Motor neuron (in vitro differentiated cells): ENCODE measurements at regions of chr1 and their contacts with region 1.

Region 1: DNA sequence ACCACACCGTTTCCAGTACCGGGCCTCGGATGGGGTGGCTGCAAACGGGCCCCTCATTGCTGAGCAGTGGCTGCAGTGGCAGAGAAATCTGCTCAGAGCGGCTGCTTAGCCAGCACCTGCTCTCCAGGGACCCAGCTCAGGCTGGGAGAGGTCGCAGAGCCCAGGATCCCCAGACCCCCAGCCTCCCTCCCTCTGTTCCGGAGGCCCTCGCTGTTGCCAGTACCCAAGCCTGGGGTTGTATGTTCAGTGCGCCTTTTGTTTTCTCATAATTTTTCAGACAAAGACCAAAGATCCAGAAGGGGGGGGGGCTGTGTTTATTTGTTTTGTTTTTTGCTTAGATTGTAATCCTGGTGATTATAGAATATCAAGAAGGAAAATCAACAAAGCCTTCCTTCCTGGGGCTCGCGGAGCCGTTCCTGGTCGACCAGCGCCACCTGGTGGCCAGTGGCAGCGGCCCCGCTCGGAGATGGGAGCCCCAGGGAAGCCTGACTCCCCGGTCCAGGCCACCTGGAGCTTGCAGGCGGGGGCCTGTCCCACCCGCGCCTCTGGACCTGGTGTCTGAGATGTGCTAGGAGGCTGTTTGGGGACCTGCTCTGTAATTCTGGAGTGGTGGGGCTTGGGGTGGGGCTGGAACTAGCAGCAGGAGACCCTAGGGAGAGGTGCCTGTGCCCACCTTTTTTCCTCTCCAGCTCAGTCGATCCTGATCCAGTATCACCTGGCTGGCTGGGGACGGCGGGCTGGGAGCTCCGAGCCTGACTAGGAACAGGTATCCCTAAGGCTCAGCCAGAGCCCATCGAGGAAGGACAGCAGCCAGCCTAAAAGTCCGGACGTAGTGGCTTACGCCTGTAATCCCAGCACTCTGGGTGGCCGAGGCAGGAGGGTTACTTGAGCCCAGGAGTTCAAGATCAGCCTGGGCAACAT is 123.9 kb upstream of the VAMP3 start:
- ATAC-seq: peak; percentile 50 to 87 (median 66)
- H3K4me3 ChIP-seq: no peak overlapping the region
- H3K27ac ChIP-seq: peak overlapping the region; percentile 44 to 66
- H3K4me1 ChIP-seq: peaks cover 44 to 49% of the 10 kb centered on the region in 2 donors

Region 2: GRCh38 chr1:6727535-6727934 is 919.7 kb before region 1 on chr1:
- in situ Hi-C with region 1: loop called in 2 of 9 experiments (anchors 25 kb)
- ATAC-seq: peak in 4 of 8 experiments; percentile 22 to 89 (median 67)
- H3K4me3 ChIP-seq: no peak overlapping the region
- H3K27ac ChIP-seq: no peak overlapping the region
- H3K4me1 ChIP-seq: peaks cover 0 to 15% of the 10 kb centered on the region in 2 donors

Region 3: DNA sequence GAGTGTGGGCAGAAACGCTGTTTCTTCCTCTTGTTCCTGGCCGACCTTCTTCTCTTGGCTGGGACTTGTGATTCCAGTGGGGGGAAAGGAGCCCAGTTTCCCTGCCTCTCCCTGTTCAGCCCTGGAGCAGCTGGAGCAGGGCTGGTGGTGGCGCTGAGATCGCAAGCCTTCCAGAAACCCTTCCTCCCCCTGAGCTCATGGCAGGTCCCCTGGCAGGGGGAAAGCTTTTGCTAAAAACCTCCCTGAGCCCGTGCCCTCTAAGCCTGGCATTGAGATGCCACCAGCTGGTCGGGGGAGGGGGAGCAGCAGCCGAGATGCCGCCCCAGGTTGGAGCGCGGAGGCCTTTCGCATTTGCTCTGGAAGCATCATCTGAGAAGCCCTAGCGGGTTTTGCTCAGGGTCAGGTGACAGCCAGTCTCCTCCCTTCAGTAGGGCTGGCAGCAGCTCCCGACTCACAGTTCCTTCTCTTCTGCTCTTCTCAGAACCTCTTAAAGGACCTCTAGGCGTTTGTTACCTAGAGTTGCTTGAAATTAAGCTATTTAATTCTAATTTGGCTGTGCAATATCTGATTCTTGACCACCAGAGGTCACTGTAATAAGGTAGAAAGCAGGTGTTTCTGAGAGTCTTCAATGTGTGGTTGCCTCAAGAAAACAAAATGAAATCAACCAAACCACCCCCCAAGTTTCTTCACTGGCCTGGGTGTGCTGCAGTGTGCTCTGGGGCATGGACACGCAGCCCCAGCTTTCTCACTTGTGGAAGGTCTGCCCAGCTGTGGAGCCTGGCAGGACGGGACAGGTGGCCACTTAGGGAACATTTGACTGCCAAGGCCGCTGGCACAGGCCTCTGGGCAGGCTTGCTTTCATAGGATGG is 604.7 kb before region 1 on chr1:
- in situ Hi-C with region 1: loop called in 2 of 9 experiments (anchors 25 kb)
- ATAC-seq: peak in 6 of 8 experiments; percentile 13 to 69 (median 62)
- H3K4me3 ChIP-seq: no peak overlapping the region
- H3K27ac ChIP-seq: peak overlapping the region in 1 of 2 donors; percentile 67
- H3K4me1 ChIP-seq: peaks cover 33 to 54% of the 10 kb centered on the region in 2 donors

Region 4: DNA sequence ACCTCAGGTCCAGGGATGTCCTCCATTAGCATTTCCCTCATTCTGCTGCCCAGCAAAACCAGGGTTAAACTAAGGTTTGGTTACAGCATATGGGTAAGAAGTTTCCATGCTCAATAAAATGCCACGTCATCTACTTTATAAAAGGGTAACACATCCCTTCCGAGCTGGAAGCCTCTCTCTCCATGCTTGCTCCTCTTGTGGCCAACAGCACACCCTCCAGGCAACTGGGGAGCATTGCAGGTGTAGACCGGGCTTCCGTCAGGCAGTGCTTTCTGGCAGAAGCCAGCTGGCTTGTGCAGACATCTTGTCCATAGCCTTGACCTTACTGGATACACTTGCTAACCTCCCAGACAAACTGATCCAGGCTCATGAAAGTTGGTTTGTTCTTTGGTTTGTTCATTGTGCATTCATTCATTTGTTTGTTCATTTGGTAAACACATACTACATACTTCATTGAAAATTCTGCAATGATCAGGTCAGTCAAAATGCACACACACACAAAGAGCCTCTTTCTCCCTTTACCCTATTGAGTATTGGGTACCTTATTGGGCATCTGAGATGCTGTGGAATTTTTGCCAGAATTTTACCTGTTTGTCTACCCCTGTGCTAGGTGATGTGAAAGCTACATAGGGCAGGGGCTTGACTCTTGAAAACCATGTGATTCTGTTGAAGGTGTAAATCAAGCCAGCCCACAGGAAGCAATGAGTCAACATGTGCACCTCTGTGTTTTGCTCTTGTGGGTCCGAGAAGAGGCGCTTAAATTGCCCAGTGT is 439.2 kb before region 1 on chr1:
- in situ Hi-C with region 1: loop called in 1 of 9 experiments (anchors 25 kb)
- ATAC-seq: peak; percentile 62 to 98 (median 86)
- H3K4me3 ChIP-seq: no peak overlapping the region
- H3K27ac ChIP-seq: no peak overlapping the region
- H3K4me1 ChIP-seq: no peaks in the 10 kb centered on the region

Region 5: GRCh38 chr1:7356079-7356478 is 291.2 kb before region 1 on chr1:
- in situ Hi-C with region 1: no loop called
- ATAC-seq: no peak
- H3K4me3 ChIP-seq: no peak overlapping the region
- H3K27ac ChIP-seq: no peak overlapping the region
- H3K4me1 ChIP-seq: peaks cover 0 to 26% of the 10 kb centered on the region in 2 donors

Region 6: GRCh38 chr1:7379445-7379971 is 267.7 kb before region 1 on chr1:
- in situ Hi-C with region 1: loop called in 1 of 9 experiments (anchors 25 kb)
- ATAC-seq: peak in 7 of 8 experiments; percentile 29 to 90 (median 82)
- H3K4me3 ChIP-seq: peak overlapping the region in 2 of 5 donors; percentile 8 to 14
- H3K27ac ChIP-seq: peak overlapping the region; percentile 67 to 73
- H3K4me1 ChIP-seq: peaks cover 35 to 38% of the 10 kb centered on the region in 2 donors